ENCODE measurements at regions of chr2 and their contacts with region 1.

Region 1: GRCh38 chr2:130332271-130333073 is 10.2 kb upstream of the IMP4 start:
- DNase-seq: peak; percentile 82
- ATAC-seq: peak; percentile 80

Region 2: GRCh38 chr2:129914538-129915302 is 417.8 kb before region 1 on chr2:
- intact Hi-C with region 1: no loop called
- DNase-seq: no peak
- ATAC-seq: peak; percentile 20

Region 3: DNA sequence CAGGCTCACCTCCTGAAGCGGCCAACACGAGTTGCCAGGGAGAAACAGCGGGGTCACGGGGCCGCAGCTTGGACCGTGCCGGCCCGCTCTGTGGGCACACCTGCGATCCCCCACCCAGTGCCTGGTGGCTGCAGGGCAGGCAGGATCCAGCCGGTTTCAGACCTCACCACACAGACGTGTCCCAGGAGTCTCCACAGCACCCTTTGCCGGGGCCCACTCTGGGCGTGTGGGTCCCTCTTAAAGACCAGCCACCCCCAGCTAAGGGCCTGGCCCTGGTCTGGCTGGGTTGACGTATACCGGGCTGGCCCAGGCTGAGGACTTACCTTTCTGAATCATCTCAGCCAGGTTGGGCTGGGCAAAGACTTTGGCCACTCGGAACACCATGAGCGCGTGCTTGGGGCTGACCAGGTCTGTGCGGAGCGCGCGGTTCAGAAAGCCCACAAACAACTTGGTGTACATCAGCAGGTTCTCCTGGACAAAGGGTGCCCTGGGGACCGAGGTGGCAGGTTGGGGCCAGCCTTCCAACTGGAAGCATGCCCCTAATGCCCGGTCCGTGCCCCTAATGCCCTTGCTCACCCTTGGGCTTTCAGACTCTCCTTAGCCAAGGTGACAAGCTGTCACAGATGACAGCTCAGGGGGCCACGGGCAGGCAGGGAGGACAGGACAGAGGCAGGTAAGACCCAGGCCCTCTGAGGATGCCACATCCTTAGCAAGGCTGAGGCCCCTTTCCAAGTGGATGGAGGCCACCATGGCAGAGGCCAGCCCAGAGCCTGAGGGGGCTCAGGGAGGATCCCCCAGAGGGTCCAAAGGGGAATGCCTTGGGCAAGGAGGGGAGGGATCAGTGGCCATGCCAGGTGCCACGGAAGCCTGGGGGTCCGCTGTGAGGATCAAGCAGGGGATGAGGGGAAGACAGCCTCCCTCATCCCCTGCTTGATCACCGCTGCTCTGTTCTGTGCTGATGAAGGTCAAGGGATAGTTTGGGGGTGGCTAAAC is 177.4 kb before region 1 on chr2:
- intact Hi-C with region 1: loop called (anchors 5 kb)
- DNase-seq: no peak
- ATAC-seq: no peak

Region 4: DNA sequence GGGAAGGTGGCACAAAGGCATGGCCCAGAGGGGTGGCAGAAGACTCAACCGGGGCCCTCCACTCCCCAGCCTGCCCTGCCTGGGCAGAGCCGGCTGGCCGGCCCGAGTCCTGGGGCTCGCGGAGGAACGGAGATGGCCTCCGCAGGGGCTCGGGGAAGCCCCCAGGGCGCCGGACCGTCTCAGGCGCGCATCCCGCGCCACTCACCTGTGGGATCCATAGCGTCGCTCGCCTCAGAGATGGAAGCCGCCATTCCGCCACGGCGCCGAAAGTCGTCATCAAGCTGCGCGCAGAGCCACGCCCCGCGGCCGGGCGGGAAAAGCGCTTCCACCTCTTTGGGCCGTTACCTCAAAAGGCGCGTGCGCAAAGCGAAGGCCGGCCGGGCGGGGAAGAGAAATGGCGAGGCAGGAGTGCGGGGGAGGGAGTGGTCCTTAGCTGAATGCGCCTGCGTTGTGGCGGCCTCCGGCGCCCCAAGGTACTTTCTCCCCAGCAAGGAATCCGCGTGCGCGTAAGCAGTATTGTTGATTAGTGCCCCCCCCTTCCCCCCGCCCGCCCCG is 151.1 kb before region 1 on chr2 and contains the start of gene SMPD4:
- intact Hi-C with region 1: loop called (anchors 10 kb)
- DNase-seq: peak; percentile 99
- ATAC-seq: peak; percentile 95
- total RNA-seq, gene SMPD4: 28.2 TPM